Dorsolateral prefrontal cortex (tissue), 120 donors: ENCODE measurements at regions of chr17 and their contacts with region 1.

Region 1: GRCh38 chr17:31094600-31095238 is at the start of gene NF1:
- DNase-seq: peak; percentile 90 to 96 (median 95)
- H3K4me3 ChIP-seq: peak within 1 kb of the TSS; percentile 67 to 97 (median 81)
- H3K27ac ChIP-seq: peak within 1 kb of the TSS; percentile 75 to 97 (median 91)
- H3K27me3 ChIP-seq: no peaks in the 10 kb centered on the region
- CTCF ChIP-seq: peak in 41 of 56 donors; percentile 1 to 57 (median 29)
- total RNA-seq, gene NF1: 89.8 to 145 (median 119) TPM

Region 2: GRCh38 chr17:31008374-31009041 is 86.2 kb before region 1 on chr17:
- intact Hi-C with region 1: loop called in 1 of 2 experiments (anchors 5 kb)
- DNase-seq: peak in 8 of 10 donors; percentile 19 to 73 (median 45)
- H3K4me3 ChIP-seq: peak overlapping the region; percentile 58 to 86 (median 73)
- H3K27ac ChIP-seq: peak overlapping the region; percentile 30 to 96 (median 83)
- H3K27me3 ChIP-seq: no peaks in the 10 kb centered on the region
- CTCF ChIP-seq: peak in 7 of 56 donors; percentile 6 to 22 (median 10)

Region 3: DNA sequence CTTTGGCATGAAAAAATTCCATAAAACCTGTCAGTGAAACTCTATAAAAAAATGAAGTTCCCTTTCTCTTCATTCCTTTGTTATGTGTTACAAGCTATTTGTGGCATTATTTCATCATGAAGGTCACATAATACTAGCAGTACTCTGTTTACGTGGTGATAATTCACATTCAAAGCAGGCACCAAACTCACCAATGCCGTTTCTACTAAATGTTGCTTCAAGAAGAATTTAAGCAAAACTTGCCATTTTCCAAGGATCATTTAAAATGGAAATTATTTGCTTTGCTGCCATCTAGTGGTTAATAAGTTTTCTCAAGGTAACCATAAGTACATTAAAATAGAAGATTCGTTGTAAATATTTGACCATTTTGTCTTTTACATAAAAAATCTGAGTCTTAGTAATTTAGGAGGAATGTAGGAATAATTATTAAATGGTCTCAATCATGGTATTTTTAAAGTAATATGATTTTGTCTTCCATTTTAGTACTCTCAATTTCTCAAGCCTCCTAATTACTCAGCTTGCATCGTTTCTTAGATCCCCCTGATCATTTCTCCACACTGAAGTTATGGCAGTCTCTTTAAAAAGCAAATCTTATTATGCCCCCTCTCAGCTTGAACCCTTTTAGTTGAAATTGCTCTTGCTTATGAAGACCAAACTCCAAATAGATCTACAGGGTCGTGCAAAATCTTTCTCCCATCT is 121.5 kb after region 1 on chr17:
- intact Hi-C with region 1: loop called in 1 of 2 experiments (anchors 10 kb)
- DNase-seq: no peak
- H3K4me3 ChIP-seq: no peak overlapping the region
- H3K27ac ChIP-seq: peak overlapping the region in 3 of 59 donors; percentile 5 to 36 (median 18)
- H3K27me3 ChIP-seq: no peaks in the 10 kb centered on the region
- CTCF ChIP-seq: peak; percentile 63 to 95 (median 79)

Region 4: DNA sequence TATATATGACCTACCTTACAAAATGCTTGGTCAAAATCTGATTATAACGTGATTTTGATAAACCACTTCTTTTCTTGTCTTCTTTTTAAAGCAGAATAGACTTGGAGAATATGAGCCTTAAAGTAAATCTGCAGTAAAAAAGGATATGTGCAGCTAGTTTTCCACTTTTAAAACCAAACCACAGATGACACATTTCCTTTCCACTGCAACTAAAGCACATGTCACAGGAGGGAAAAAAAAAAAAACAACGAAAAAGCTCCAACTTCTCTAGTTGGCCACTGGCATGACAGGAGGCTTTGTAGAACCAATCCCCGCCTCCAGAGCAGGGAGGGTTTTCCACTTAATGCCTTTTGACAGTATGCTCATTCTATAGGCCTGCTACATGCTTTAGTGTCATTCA is 226.8 kb after region 1 on chr17 and contains the start of gene EVI2A:
- intact Hi-C with region 1: loop called in 1 of 2 experiments (anchors 10 kb)
- DNase-seq: peak in 7 of 10 donors; percentile 39 to 67 (median 53)
- H3K4me3 ChIP-seq: peak within 1 kb of the TSS; percentile 25 to 78 (median 55)
- H3K27ac ChIP-seq: peak within 1 kb of the TSS; percentile 7 to 98 (median 94)
- H3K27me3 ChIP-seq: no peaks in the 10 kb centered on the region
- CTCF ChIP-seq: peak in 10 of 56 donors; percentile 12 to 34 (median 22)
- total RNA-seq, gene EVI2A: 7.6 to 203 (median 47.5) TPM